HepG2 (cell line): ENCODE measurements at regions of chr7 and their contacts with region 1.

Region 1: GRCh38 chr7:137970253-137970975 is 31.5 kb downstream of the CREB3L2 start:
- DNase-seq: no peak
- ATAC-seq: no peak
- H3K4me3 ChIP-seq: no peak overlapping the region
- H3K27ac ChIP-seq: peak overlapping the region; percentile 57
- H3K4me1 ChIP-seq: peaks cover 100% of the 10 kb centered on the region
- H3K27me3 ChIP-seq: no peaks in the 10 kb centered on the region
- CTCF ChIP-seq: no peak
- EP300 ChIP-seq: no peak
- POLR2A ChIP-seq: no peak
- RAD21 ChIP-seq: no peak

Region 2: GRCh38 chr7:137934941-137935883 is 35.2 kb before region 1 on chr7:
- CTCF ChIA-PET with region 1: no interaction called
- POLR2A ChIA-PET with region 1: no interaction called
- in situ Hi-C with region 1: no loop called
- intact Hi-C with region 1: loop called (anchors 5 kb)
- DNase-seq: no peak
- ATAC-seq: no peak
- H3K4me3 ChIP-seq: no peak overlapping the region
- H3K27ac ChIP-seq: no peak overlapping the region
- H3K4me1 ChIP-seq: peaks cover 100% of the 10 kb centered on the region
- H3K27me3 ChIP-seq: no peaks in the 10 kb centered on the region
- CTCF ChIP-seq: no peak
- EP300 ChIP-seq: no peak
- POLR2A ChIP-seq: no peak
- RAD21 ChIP-seq: no peak

Region 3: DNA sequence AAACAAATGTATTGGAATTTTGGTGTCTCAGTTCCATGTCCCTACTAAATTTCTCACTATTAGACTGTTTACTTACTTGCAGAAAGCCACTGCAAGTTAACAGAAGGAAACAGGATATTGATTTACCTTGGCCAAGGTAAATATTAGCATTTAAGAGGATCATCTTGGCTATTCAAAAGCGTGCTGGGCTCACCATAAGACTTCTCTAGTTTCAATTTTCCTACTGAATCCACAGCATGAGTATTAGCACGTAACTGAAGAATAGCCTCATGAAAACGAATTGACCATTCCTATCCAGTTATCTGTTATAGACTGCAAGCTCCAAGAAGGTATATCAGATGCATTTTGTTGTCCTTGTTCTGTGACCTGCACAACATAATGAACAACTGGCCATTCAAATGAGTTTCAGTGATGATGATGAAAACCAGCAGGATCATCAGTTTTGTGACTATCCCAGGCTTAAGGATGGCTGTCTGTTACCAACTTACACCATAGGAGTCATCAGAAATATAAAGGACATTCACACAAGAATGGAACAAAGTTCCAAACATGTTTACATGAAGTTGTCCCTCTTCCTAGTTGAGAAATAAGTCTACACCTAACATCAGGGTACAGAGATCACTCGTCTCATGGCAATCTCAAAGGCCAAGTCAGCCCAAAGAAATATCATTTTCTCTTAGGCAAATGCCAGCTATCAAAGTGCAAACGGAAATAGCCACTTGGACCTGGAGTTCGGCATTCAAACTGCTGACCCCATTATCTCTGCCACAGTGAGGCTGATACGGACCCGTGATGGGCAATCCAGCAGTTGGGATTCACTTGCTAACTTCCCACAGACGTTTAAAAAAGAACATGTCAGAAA is 21.7 kb before region 1 on chr7:
- CTCF ChIA-PET with region 1: no interaction called
- POLR2A ChIA-PET with region 1: interaction called, 19 read pairs
- in situ Hi-C with region 1: no loop called
- intact Hi-C with region 1: loop called (anchors 2 kb)
- DNase-seq: peak; percentile 90
- ATAC-seq: peak; percentile 79
- H3K4me3 ChIP-seq: peak overlapping the region; percentile 11 to 47 (median 32); a peak in 4 of 6 replicates
- H3K27ac ChIP-seq: peak overlapping the region; percentile 88
- H3K4me1 ChIP-seq: peaks cover 96% of the 10 kb centered on the region
- H3K27me3 ChIP-seq: no peaks in the 10 kb centered on the region
- CTCF ChIP-seq: no peak
- EP300 ChIP-seq: peak in 1 of 2 experiments; percentile 95; a peak in 2 of 4 replicates
- POLR2A ChIP-seq: peak; percentile 33 to 35; a peak in 1 of 4 replicates
- RAD21 ChIP-seq: no peak

Region 4: DNA sequence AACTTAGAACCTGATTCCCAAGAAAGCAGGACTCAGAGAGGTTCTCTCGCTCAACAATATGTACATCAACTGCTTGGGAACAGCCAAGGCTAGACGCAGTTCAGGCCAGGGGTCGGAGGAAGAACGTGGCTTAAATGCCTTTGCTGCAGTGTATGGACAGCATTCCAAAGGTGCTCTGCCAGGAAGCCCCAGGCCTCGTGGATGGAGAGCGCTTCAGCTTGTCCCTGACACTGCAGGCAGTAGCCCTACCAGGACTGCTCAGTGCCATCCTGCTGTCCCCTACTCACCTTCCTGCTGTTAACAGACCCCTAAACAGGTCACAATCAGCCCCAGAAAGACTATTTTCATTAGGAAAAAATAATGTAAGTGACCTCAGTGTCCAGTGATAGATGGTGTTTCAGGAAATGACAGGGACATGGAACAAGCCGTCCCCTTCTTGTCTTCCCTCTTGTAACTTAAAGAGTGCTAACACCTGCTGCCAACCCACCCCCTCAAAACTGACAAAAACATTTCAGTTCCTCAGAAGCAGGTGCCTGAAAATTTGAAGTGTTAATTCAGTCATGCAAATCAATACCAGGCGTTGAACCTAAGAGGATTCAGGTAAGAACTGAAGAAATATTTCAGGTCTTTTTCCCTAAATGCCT is 15.0 kb after region 1 on chr7:
- CTCF ChIA-PET with region 1: no interaction called
- POLR2A ChIA-PET with region 1: interaction called, 8 read pairs
- in situ Hi-C with region 1: no loop called
- intact Hi-C with region 1: loop called (anchors 2 kb)
- DNase-seq: peak; percentile 32
- ATAC-seq: peak; percentile 75
- H3K4me3 ChIP-seq: no peak overlapping the region; a peak in 1 of 6 replicates
- H3K27ac ChIP-seq: peak overlapping the region; percentile 59
- H3K4me1 ChIP-seq: peaks cover 100% of the 10 kb centered on the region
- H3K27me3 ChIP-seq: no peaks in the 10 kb centered on the region
- CTCF ChIP-seq: no peak
- EP300 ChIP-seq: no peak
- POLR2A ChIP-seq: no peak
- RAD21 ChIP-seq: no peak

Region 5: DNA sequence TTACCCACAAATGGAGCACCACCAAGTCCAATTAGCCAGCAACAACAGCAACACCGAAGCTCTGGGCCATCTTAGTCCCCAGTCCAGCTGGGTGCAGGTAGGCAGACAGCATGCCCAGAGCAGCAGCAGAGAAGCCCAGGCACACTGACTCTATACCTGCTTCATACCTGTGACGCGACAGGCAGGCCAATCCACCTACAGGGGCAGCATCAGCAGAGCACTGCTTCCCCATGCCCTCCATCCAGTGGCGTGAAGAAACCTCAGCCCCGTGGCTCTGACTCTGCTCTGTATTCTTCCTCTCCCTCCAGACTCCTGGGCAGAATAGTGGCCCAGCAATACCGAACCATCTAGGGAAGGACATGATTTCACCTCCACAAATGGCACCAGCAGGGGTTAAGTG is 297.5 kb after region 1 on chr7:
- CTCF ChIA-PET with region 1: no interaction called
- POLR2A ChIA-PET with region 1: no interaction called
- in situ Hi-C with region 1: no loop called
- intact Hi-C with region 1: no loop called
- DNase-seq: no peak
- ATAC-seq: no peak
- H3K4me3 ChIP-seq: no peak overlapping the region
- H3K27ac ChIP-seq: no peak overlapping the region
- H3K4me1 ChIP-seq: peaks cover 6% of the 10 kb centered on the region
- H3K27me3 ChIP-seq: no peaks in the 10 kb centered on the region
- CTCF ChIP-seq: no peak
- EP300 ChIP-seq: no peak
- POLR2A ChIP-seq: no peak
- RAD21 ChIP-seq: no peak